Dendritic cell treated with granulocyte-macrophage colony-stimulating factor and Interleukin-4, amounts not matched to agents 40 ng/mL and 50 ng/mL, for 4 days (primary cell): ENCODE measurements at regions of chr12 and their contacts with region 1.

Region 1: DNA sequence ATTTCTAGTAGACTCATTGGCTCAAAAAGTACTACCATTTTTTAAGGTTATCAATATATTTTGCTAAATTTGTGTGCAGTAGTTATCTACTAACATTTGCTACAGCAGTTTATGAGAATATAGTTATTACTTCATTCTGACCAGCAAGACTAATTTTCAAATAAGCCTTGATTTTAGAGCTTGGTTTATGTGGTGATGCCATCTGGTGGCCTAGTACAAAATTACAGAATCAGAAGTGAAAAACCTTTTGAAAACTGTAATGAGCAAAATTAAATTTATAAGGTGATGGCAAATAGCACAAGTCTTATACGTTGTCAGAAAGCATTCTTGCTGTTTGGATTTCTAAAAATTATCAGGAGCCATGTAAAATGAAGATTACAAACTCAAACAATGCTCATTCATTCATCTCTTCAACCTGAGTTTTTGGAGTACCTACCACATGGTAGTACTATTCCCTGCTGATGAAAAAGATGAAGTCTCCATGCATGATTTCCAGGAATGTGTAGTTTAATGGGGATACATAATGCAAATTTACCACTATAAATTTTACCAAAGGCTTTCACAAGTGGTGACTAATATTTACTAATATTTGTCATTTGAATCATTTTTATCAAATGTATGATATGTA is 51.0 kb downstream of the MAGOHB start:
- H3K4me3 Mint-ChIP-seq: no peak overlapping the region
- H3K27ac Mint-ChIP-seq: no peak overlapping the region
- H3K4me1 Mint-ChIP-seq: no peaks in the 10 kb centered on the region
- H3K27me3 Mint-ChIP-seq: no peaks in the 10 kb centered on the region

Region 2: DNA sequence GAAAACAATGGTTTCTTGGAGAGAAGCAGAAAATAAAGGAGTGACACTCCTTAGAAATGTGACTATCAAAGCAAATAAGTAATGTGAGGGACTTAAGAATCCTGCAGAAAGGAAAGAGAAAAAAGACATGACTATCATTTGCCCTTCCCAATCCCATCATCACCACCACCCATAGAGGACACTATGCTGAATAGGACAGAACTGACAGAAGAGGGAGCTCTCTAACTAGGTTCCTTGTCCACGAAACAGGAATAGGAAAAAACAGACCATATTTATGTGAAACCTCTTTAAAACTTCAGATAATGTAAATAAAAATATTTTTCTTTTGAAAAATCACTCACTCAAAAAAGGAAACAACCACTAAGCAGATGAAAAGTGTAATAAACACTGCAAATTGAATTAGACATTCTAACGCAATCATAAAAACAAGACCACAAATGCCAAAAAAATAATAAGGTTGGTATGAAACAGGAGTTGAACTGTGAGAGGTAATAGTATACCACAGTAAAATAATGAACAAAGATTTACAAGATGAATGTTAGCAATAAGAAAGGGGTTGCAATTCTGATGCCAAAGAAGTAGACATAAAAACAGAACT is 230.7 kb before region 1 on chr12:
- intact Hi-C with region 1: loop called (anchors 1 kb)
- H3K4me3 Mint-ChIP-seq: no peak overlapping the region
- H3K27ac Mint-ChIP-seq: no peak overlapping the region
- H3K4me1 Mint-ChIP-seq: peaks cover 12% of the 10 kb centered on the region
- H3K27me3 Mint-ChIP-seq: peaks cover 8% of the 10 kb centered on the region

Region 3: GRCh38 chr12:10618338-10618987 is 56.0 kb after region 1 on chr12:
- intact Hi-C with region 1: no loop called
- H3K4me3 Mint-ChIP-seq: no peak overlapping the region
- H3K27ac Mint-ChIP-seq: no peak overlapping the region
- H3K4me1 Mint-ChIP-seq: no peaks in the 10 kb centered on the region
- H3K27me3 Mint-ChIP-seq: no peaks in the 10 kb centered on the region

Region 4: GRCh38 chr12:10838461-10838860 is 276.0 kb after region 1 on chr12:
- intact Hi-C with region 1: no loop called
- H3K4me3 Mint-ChIP-seq: no peak overlapping the region
- H3K27ac Mint-ChIP-seq: no peak overlapping the region
- H3K4me1 Mint-ChIP-seq: no peaks in the 10 kb centered on the region
- H3K27me3 Mint-ChIP-seq: no peaks in the 10 kb centered on the region